Panc1 (cell line): ENCODE measurements at regions of chr19 and their contacts with region 1.

Region 1: GRCh38 chr19:7961921-7962626 is 18.6 kb upstream of the TIMM44 start:
- DNase-seq: no peak
- ATAC-seq: no peak
- H3K4me3 ChIP-seq: no peak overlapping the region
- H3K27ac ChIP-seq: no peak overlapping the region
- H3K4me1 ChIP-seq: no peaks in the 10 kb centered on the region
- H3K27me3 ChIP-seq: no peaks in the 10 kb centered on the region
- CTCF ChIP-seq: no peak

Region 2: DNA sequence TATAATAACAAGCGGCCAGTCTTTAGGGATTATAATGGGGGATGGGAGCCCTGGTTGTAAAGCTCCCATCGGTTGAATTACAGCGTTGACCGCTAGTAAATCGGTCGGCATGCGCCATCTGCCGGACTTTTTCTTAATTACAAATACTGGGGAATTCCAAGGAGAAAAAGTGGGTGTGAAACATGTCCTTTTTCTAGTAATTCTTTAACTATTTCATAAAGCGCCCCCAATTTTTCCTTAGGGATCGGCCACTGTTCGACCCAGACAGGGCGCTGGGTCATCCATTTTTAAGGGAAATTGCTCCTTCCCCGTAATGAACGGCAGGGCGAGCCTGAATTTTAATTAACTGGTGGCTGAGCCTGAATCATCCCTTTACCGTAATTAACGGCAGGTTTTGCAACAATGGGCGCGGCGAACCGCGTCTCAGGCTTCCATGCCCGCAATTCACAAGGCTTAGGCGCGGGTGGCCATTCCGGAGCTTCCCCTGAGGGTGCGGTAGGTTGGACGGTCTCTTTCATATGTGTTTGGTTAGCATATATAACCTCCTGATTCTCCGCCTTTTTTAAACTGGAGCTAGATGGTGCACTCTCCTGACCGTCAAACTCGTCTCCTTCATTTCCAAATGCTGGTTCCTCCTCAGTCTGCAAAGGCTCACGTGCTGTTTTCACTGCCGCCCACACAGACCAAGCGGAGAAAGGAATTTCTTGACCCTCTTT is 162.3 kb before region 1 on chr19:
- CTCF ChIA-PET with region 1: no interaction called
- POLR2A ChIA-PET with region 1: no interaction called
- in situ Hi-C with region 1: no loop called
- intact Hi-C with region 1: no loop called
- DNase-seq: no peak
- ATAC-seq: peak; percentile 84
- H3K4me3 ChIP-seq: peak overlapping the region; percentile 30 to 44
- H3K27ac ChIP-seq: 0 out of 2 replicates have a peak overlapping the region, but pooled peaks have one; percentile 23
- H3K4me1 ChIP-seq: peaks cover 3% of the 10 kb centered on the region; the same call in 1 of the 2 replicates
- H3K27me3 ChIP-seq: no peaks in the 10 kb centered on the region; the same call in 1 of the 2 replicates
- CTCF ChIP-seq: peak; percentile 74

Region 3: DNA sequence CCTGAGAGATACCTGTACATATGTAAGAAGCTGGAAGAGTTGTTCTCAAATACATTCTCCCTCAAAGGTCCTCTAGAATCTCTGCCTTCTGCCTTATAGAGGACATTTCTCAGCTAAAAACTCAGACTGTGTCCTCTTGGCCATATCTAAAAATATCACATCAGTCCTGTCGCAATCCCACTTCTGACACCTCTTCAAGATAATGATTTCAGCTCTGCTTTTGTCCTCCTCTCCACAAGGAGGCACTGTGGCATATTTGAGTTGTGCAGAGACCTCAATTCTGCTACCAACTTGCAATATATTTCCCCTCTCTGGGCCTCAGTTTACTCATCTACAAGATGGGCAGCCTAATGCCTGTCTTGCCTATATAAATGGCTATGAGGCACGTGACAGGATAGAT is 631.9 kb after region 1 on chr19:
- CTCF ChIA-PET with region 1: no interaction called
- POLR2A ChIA-PET with region 1: interaction called, 17 read pairs
- in situ Hi-C with region 1: no loop called
- intact Hi-C with region 1: no loop called
- DNase-seq: no peak
- ATAC-seq: no peak
- H3K4me3 ChIP-seq: no peak overlapping the region
- H3K27ac ChIP-seq: no peak overlapping the region
- H3K4me1 ChIP-seq: no peaks in the 10 kb centered on the region
- H3K27me3 ChIP-seq: no peaks in the 10 kb centered on the region
- CTCF ChIP-seq: no peak